GM12878 (cell line): ENCODE measurements at regions of chr7 and their contacts with region 1.

Region 1: DNA sequence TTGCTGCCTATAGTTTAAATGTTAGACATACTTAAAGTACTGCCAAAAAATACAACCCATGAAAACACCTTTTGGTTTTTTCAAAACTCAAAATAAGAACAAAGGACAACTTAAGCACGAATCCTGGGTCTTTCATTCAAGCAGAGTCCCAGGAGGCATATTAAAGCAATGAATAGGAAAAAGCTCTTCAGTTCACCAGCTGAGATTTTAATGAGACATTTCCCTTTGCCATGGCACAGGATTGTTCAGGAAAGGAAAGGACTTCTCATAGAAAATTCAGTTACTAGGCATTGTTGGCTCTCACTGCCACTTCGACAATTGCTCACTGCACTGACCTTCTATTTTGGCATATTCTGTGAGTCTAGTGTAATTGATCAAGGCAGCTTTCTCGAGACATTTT is 133.5 kb upstream of the FEZF1 start:
- DNase-seq: no peak
- ATAC-seq: no peak
- H3K4me3 ChIP-seq: no peak overlapping the region
- H3K27ac ChIP-seq: no peak overlapping the region
- H3K4me1 ChIP-seq: no peaks in the 10 kb centered on the region
- H3K27me3 ChIP-seq: no peaks in the 10 kb centered on the region
- CTCF ChIP-seq: no peak
- EP300 ChIP-seq: no peak
- POLR2A ChIP-seq: no peak
- RAD21 ChIP-seq: no peak

Region 2: DNA sequence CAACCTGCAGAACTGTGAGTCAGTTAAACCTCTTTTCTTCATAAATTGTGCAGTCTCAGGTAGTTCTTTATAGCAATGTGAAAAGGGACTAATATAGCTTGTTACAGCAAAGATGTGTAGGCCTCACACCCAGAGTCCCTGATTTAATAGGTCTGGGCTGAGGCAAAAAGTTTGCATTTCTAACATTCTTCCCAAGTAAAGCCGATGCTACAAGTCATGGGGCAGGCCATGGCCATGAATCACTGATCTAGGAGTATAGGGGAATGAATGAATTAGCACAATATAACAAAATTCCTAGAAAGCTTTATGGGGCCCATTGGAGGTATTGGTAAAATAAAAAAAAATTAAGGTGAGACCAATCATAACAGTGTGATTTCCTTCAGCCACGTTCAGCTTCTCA is 282.4 kb before region 1 on chr7:
- CTCF ChIA-PET with region 1: no interaction called
- POLR2A ChIA-PET with region 1: no interaction called
- RAD21 ChIA-PET with region 1: no interaction called
- SMC1A ChIA-PET with region 1: no interaction called
- in situ Hi-C with region 1: no loop called
- intact Hi-C with region 1: no loop called
- DNase-seq: no peak
- ATAC-seq: no peak
- H3K4me3 ChIP-seq: no peak overlapping the region
- H3K27ac ChIP-seq: no peak overlapping the region
- H3K4me1 ChIP-seq: no peaks in the 10 kb centered on the region
- H3K27me3 ChIP-seq: no peaks in the 10 kb centered on the region; a peak in 1 of 4 replicates
- CTCF ChIP-seq: no peak
- EP300 ChIP-seq: no peak
- POLR2A ChIP-seq: no peak
- RAD21 ChIP-seq: no peak

Region 3: DNA sequence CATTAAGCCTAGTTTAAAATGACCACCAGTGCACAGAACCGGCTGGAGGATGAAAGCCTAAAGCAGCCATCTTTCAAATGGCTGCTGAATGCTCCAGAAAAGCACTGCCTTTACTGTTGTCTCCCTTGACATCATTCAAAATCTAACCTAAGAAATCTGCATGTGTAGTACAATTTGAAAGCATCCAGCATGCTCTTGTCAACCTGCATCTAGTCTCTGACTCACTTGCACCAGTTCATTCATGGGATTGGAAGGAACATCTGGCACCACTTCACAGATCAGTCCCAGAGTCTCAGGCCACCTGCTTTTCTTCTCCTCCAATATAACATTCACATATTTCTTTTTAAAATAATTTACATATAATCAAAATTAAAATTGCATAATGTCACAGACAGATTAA is 184.7 kb after region 1 on chr7:
- CTCF ChIA-PET with region 1: no interaction called
- POLR2A ChIA-PET with region 1: interaction called, 10 read pairs
- RAD21 ChIA-PET with region 1: no interaction called
- SMC1A ChIA-PET with region 1: no interaction called
- in situ Hi-C with region 1: no loop called
- intact Hi-C with region 1: no loop called
- DNase-seq: no peak
- ATAC-seq: no peak
- H3K4me3 ChIP-seq: no peak overlapping the region
- H3K27ac ChIP-seq: no peak overlapping the region
- H3K4me1 ChIP-seq: no peaks in the 10 kb centered on the region
- H3K27me3 ChIP-seq: no peaks in the 10 kb centered on the region
- CTCF ChIP-seq: no peak
- EP300 ChIP-seq: no peak
- POLR2A ChIP-seq: no peak
- RAD21 ChIP-seq: no peak